Left colon (tissue), 2 donors: ENCODE measurements at regions of chr13 and their contacts with region 1.

Region 1: DNA sequence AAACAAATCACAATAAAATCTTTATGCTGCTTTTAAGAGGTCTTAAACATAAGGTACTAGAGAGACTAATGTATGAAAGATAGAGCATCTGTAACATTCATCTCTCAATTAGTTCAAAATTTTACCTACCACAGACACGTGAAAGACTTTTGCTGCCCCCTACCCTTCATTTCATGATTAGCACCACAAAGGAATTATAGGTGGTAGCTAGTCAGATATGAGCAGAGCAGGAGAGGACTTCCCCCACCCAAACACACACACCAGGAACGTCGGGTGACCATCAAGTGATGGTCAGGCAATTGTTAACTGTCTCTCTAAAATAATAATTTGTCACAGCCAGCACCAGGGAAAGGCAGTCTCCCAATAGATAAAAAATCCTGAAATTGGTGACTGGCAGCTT is 1531.7 kb upstream of the SPRY2 start:
- DNase-seq: no peak
- ATAC-seq: no peak

Region 2: GRCh38 chr13:81540777-81541176 is 331.8 kb before region 1 on chr13:
- intact Hi-C with region 1: loop called in 1 of 2 experiments (anchors 10 kb)
- DNase-seq: no peak
- ATAC-seq: no peak